H1 (cell line): ENCODE measurements at regions of chr15 and their contacts with region 1.

Region 1: DNA sequence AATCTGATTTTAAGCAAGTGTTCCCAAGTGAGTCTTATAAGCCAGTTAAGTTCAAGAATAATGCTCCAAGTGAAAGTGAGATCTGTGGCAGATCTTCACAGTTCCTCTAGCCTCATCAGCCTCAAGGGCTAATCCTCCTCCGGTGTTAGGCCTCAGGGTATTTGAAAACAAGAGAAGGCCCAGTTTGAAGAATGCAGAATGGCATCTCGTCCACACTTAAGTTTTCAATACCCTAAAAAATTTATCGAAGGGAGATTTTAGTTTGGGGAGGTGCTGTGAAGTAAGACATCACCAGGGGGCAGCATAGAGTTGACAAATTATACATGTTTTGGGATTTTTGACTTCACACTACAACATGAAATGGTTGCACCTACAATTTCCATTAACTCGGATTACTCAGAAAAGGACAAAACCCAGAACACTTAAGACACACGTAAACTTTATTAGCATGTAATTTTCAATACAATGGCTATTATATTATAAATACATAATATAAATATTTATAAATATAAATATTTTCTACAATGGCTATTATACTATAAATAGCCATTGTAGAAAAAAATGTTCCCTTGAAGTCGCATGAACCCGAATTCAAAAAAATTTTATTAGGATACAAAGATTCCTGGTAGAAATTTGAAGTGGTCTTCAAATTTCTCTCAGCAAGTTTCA is 2.3 kb upstream of the TMEM266 start:
- DNase-seq: no peak
- H3K4me3 ChIP-seq: no peak overlapping the region
- H3K27ac ChIP-seq: no peak overlapping the region
- H3K4me1 ChIP-seq: peaks cover 0 to 16% (median 6%) of the 10 kb centered on the region in 4 experiments; a peak in 6 of 7 replicates
- H3K27me3 ChIP-seq: peaks cover 0 to 14% (median 3%) of the 10 kb centered on the region in 4 experiments; a peak in 5 of 7 replicates
- CTCF ChIP-seq: peak in 2 of 3 experiments; percentile 58 to 60; a peak in 3 of 4 replicates
- EP300 ChIP-seq: no peak
- POLR2A ChIP-seq: no peak
- RAD21 ChIP-seq: peak; percentile 61 to 66

Region 2: GRCh38 chr15:75928680-75929608 is 128.5 kb before region 1 on chr15:
- CTCF ChIA-PET with region 1: interaction called, 13 read pairs
- POLR2A ChIA-PET with region 1: interaction called, 3 read pairs
- DNase-seq: peak in 1 of 2 experiments; percentile 60
- H3K4me3 ChIP-seq: no peak overlapping the region
- H3K27ac ChIP-seq: no peak overlapping the region
- H3K4me1 ChIP-seq: peaks cover 0 to 11% (median 3%) of the 10 kb centered on the region in 4 experiments; a peak in 3 of 7 replicates
- H3K27me3 ChIP-seq: no peaks in the 10 kb centered on the region
- CTCF ChIP-seq: peak; percentile 60 to 87 (median 76)
- EP300 ChIP-seq: no peak
- POLR2A ChIP-seq: no peak
- RAD21 ChIP-seq: peak; percentile 68 to 76

Region 3: DNA sequence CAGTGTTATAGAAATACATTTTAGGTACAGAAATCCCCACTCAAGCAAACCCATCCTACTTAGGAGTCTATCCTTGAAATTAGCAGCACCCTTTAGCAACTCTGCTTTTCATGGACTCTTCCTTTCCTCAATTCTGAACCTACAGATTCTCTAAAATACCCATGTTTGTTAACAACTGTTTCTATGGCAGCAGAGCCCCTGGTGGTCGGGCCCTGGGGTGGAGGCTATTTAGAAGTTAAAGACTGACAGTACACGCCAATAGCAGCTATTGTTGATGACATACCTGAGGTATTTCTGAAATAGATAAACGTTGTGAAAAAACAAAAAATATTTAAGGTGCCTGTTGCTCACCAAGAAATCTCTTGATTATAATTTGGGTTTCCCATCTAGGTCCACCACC is 21.9 kb before region 1 on chr15:
- CTCF ChIA-PET with region 1: interaction called, 12 read pairs
- POLR2A ChIA-PET with region 1: no interaction called
- DNase-seq: no peak
- H3K4me3 ChIP-seq: peak overlapping the region in 1 of 4 experiments; percentile 7; a peak in 1 of 8 replicates
- H3K27ac ChIP-seq: no peak overlapping the region
- H3K4me1 ChIP-seq: peaks cover 0 to 12% (median 5%) of the 10 kb centered on the region in 4 experiments; a peak in 4 of 7 replicates
- H3K27me3 ChIP-seq: no peaks in the 10 kb centered on the region
- CTCF ChIP-seq: no peak
- EP300 ChIP-seq: no peak
- POLR2A ChIP-seq: no peak
- RAD21 ChIP-seq: no peak; a peak in 1 of 4 replicates

Region 4: DNA sequence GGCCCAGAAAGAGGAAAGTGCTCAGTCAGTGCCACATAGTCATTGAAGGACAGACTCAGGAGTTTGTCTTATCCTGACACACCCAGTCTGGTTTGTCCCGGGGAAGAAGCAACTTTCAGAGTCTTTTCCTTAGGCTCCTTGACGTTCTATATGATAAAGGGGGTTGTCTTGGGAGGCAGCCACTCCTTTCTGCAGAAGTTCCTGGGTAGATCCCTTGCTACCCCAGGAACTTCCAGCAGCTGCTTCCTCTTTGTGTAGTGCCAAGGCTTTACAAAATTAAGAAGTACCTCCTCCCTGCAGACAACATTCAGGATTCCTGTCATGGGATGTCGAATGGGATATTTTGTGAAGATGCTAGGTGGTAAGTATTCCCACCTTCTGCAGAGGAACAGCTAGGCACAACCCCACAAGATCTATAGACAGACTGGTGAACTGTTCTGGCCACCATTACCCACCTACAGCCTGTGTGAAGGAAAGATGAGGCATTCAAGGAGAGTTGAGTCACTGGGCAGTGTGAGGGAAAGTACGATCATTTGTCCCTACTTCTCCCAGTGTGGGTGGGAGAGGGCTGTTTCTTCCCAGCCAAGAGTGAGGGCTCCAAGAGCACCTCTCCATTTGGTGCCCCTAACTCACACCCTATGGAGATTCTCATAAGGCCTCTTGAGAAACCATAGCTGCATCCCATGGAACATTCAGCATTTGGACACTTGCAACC is 13.6 kb after region 1 on chr15:
- CTCF ChIA-PET with region 1: interaction called, 10 read pairs
- POLR2A ChIA-PET with region 1: interaction called, 3 read pairs
- DNase-seq: no peak
- H3K4me3 ChIP-seq: no peak overlapping the region
- H3K27ac ChIP-seq: no peak overlapping the region
- H3K4me1 ChIP-seq: no peaks in the 10 kb centered on the region
- H3K27me3 ChIP-seq: no peaks in the 10 kb centered on the region
- CTCF ChIP-seq: no peak
- EP300 ChIP-seq: no peak
- POLR2A ChIP-seq: no peak
- RAD21 ChIP-seq: no peak

Region 5: DNA sequence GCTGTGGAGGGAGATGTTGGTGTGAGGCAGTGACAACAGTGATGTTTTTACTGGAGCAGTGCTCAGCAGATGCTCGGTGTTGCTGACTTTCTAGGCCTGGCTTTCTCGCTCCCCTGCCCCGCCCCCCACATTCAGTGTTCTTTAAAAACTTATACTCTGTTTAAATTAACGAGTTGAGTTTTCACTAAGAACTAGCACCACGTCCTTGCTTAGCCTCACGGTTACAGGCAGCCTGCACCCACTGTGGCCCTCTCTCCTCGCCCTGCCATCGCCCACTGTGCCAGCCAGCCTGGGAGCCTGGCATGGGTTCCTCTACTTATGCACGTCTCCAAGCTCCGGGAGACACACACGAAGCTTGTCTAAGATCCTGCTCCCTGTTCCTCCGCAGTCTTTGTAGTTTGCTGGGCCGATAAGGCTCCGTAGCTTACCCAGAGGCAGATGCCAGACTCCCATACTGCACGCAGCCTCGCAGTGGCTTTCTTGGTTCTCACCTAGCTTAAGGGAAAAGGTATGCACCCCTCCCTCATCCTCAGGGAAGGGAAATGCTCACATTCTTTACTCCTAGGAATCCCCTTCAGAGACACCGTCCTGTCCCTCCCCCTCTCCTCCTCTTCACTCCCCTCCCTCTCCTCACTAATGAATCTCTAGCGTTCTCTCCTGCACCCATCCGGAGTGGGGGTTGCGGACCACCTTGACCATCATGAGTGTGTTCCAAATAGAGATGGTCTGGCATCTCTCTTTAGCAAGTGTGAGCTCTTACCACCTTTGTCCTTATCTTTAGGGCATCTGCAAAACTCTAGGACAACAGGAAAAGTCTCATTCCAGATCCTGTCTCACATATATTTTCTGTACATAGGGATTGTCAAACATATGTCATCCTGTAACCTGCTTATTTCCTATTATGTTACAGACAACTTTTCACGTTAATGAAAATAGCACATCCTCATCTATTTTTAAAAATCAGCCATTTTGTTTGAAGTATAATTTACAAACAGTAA is 58.7 kb after region 1 on chr15:
- CTCF ChIA-PET with region 1: interaction called, 20 read pairs
- POLR2A ChIA-PET with region 1: no interaction called
- DNase-seq: peak in 1 of 2 experiments; percentile 54
- H3K4me3 ChIP-seq: peak overlapping the region in 1 of 4 experiments; percentile 21; a peak in 2 of 8 replicates
- H3K27ac ChIP-seq: no peak overlapping the region
- H3K4me1 ChIP-seq: peaks cover 0 to 10% (median 7%) of the 10 kb centered on the region in 4 experiments; a peak in 6 of 7 replicates
- H3K27me3 ChIP-seq: no peaks in the 10 kb centered on the region
- CTCF ChIP-seq: peak in 1 of 3 experiments; percentile 15; a peak in 1 of 4 replicates
- EP300 ChIP-seq: no peak
- POLR2A ChIP-seq: no peak
- RAD21 ChIP-seq: peak; percentile 9 to 37; a peak in 1 of 4 replicates

Region 6: DNA sequence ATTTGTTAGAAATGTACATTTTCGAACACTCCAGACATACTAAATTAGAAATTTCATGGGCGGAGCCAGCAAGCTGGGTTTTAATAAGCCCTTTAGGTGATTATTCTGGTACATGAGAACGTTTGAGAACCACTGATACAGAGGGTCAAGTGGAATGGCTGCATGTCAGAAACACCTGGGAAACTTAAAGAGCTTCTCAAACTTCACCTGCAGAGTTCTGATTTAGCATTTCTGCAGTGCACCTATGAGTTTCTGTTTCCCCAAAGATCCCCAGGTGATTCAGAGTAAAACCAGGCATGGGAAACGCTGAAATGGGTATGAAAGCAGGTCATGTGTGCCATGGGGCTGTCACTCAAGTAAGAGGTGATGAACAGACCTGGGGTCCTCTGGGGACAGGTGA is 70.4 kb after region 1 on chr15:
- CTCF ChIA-PET with region 1: interaction called, 164 read pairs
- POLR2A ChIA-PET with region 1: no interaction called
- DNase-seq: no peak
- H3K4me3 ChIP-seq: no peak overlapping the region
- H3K27ac ChIP-seq: no peak overlapping the region
- H3K4me1 ChIP-seq: 0 out of 7 replicates have a peak, but pooled peaks cover 0 to 2% (median 0%) of the 10 kb centered on the region in 4 experiments
- H3K27me3 ChIP-seq: no peaks in the 10 kb centered on the region
- CTCF ChIP-seq: no peak
- EP300 ChIP-seq: no peak
- POLR2A ChIP-seq: no peak
- RAD21 ChIP-seq: no peak

Region 7: DNA sequence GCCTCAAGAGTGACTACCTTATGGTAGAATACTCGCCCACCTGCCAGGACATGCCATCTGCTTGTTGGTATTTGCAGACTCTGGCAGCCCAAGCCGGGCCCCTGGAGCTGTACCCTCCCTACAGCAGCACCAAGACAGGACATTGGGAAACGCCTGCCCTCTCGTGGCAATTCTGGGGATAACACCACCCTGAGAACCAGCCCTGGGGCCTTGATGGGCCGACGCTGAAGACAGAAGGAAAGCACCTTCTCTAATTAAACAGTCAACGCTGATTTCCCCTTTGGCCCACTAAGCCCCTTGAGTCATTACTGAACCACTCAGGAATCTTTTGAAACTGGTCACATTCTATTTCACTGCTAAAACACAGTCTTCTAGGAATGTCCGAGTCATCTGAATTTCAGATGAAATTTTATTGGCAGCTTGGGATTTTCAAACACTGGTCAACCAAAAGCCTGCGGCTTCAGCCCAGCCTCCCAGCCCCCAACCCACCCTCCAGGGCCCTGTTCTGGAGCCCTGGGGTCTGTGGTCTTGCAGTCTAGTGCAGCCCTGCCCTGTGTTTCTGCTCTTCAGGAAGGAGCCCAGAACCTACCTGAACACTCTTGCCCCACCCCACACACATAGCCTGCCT is 93.6 kb after region 1 on chr15:
- CTCF ChIA-PET with region 1: interaction called, 41 read pairs
- POLR2A ChIA-PET with region 1: no interaction called
- DNase-seq: peak; percentile 85 to 96
- H3K4me3 ChIP-seq: peak overlapping the region in 3 of 4 experiments; percentile 8 to 25 (median 23); a peak in 1 of 8 replicates
- H3K27ac ChIP-seq: no peak overlapping the region
- H3K4me1 ChIP-seq: peaks cover 0 to 26% (median 21%) of the 10 kb centered on the region in 4 experiments; a peak in 6 of 7 replicates
- H3K27me3 ChIP-seq: no peaks in the 10 kb centered on the region
- CTCF ChIP-seq: peak; percentile 90 to 91 (median 91)
- EP300 ChIP-seq: no peak
- POLR2A ChIP-seq: no peak
- RAD21 ChIP-seq: peak; percentile 72 to 82